Aorta (tissue), 5 donors: ENCODE measurements at regions of chr16 and their contacts with region 1.

Region 1: GRCh38 chr16:72664509-72665225 is 383.3 kb downstream of the ZFHX3 start:
- DNase-seq: peak; percentile 98
- ATAC-seq: peak; percentile 99
- H3K4me3 ChIP-seq: peak overlapping the region; percentile 74 to 93
- H3K27ac ChIP-seq: no peak overlapping the region
- H3K4me1 ChIP-seq: no peaks in the 10 kb centered on the region
- H3K27me3 ChIP-seq: no peaks in the 10 kb centered on the region

Region 2: DNA sequence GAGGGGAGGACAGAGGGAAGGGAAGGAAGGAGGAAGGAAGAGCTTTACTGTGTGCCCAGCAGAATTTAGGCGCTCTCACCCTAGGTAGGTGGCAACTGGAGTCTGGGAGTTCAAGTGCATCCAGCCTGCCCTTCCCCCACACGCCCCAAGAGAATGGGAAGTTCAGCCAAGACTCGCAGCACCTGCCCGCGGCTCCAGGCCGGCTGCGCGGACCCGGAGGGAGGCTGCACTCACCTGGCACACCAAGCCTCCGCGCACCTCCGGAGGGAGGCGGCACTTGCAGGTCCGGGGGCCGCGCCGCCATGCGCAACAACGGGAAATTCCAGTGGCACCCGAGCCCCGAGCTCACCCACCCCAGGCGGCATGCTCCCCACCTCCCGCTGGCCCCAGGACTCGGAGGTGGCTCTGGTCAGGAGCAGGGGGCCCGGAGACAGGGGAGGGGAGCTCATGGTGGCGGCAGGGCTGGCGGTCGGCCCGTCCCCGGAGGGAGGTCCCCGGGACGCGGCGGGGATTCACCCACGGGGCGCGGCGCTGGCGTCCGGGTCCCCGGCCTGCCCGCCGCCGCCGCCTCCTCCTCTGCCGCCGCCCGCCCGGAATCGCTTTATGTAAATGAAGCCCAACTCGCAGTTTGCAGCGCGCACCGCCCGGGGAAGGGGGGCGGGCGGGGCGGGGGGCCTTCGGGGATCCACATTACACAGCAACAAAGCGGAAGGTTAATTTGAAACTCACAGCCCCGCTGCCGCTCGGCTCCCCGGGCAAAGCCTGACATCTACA is 383.0 kb after region 1 on chr16 and contains the start of gene ZFHX3:
- intact Hi-C with region 1: loop called in 1 of 2 experiments (anchors 10 kb)
- DNase-seq: peak; percentile 85 to 90
- ATAC-seq: peak; percentile 65
- H3K4me3 ChIP-seq: peak within 1 kb of the TSS; percentile 79 to 96
- H3K27ac ChIP-seq: peak within 1 kb of the TSS; percentile 100
- H3K4me1 ChIP-seq: peaks cover 6 to 9% of the 10 kb centered on the region in 2 donors
- H3K27me3 ChIP-seq: no peaks in the 10 kb centered on the region
- total RNA-seq, gene ZFHX3: 67.4 to 96.9 TPM

Region 3: DNA sequence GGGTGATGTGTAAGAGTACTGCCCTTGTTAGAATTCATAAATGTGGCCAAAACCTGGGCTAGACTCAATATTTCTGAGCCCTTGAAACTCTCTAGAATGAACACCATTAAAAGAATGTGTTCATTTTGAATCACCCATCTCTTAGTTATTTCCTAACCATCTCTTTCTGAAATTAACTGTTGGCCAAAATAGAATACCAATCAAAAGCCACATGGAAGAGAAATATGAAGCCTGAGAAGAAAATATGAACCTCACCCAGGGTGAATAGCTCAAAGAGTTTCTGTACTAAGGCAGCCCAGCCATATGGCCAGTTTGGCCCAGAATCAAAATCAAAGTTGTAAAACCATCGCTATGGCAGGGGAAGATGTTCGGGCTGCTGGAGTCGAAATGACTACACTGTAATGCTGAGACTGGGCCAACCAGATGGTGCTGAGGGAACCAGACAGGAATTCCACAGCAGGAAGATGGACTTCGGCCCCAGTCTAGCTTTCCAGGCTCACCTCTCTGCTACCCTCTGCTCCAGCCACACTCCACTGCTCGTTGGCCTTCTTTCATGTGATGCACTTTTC is 537.6 kb after region 1 on chr16:
- intact Hi-C with region 1: loop called in 1 of 2 experiments (anchors 10 kb)
- DNase-seq: no peak
- ATAC-seq: peak; percentile 33
- H3K4me3 ChIP-seq: no peak overlapping the region
- H3K27ac ChIP-seq: no peak overlapping the region
- H3K4me1 ChIP-seq: no peaks in the 10 kb centered on the region
- H3K27me3 ChIP-seq: no peaks in the 10 kb centered on the region